CD14-positive monocyte (primary cell): ENCODE measurements at regions of chr12 and their contacts with region 1.

Region 1: DNA sequence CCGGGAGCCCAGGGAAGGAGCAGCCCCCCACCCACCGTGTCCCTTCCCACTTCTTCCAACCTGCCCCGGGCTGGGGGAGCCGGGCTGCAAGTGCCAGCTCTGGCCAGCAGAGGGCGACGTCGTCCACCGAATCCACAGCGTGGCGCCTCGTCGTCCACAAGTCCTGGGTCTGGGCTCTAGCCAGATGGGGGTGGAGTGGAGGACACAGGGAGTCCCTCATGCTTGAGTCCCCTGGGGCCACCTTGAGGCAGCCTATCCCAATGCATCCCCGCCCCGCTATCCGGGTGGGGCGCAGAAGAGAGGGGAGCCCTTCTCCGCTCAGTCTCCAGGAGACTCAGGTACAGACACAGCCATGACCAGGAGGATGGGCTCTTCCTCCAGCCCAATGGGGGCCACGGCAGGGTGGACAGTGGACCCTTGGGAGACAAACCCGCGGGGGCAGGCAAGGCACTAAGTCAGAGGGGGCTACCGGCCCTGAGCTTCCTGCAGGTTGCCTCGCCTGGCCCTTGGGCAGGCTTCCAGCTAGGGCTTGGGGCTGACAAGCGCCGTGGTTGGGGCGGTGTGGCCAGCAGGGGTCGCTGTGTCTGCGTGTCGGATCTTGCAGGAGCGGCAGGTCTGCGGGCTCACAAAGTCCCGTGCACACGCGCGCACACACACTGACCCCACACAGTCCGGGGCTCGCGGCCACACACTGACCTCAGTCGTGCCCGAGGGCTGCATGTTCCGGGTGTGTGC is 5.5 kb downstream of the AQP5 start:
- DNase-seq: peak; percentile 83 to 88 (median 87)
- H3K4me3 ChIP-seq: peak overlapping the region; percentile 10 to 75 (median 42)
- H3K4me3 Mint-ChIP-seq: peak overlapping the region; percentile 73 to 85
- H3K27ac ChIP-seq: no peak overlapping the region
- H3K27ac Mint-ChIP-seq: peak overlapping the region in 3 of 7 donors; percentile 7 to 59 (median 49)
- H3K4me1 ChIP-seq: peaks cover 19 to 26% of the 10 kb centered on the region in 2 donors
- H3K4me1 Mint-ChIP-seq: peaks cover 12% of the 10 kb centered on the region
- H3K27me3 ChIP-seq: peaks cover 9 to 72% of the 10 kb centered on the region in 2 donors
- H3K27me3 Mint-ChIP-seq: peaks cover 48 to 56% (median 49%) of the 10 kb centered on the region in 3 donors
- CTCF ChIP-seq: peak; percentile 97

Region 2: DNA sequence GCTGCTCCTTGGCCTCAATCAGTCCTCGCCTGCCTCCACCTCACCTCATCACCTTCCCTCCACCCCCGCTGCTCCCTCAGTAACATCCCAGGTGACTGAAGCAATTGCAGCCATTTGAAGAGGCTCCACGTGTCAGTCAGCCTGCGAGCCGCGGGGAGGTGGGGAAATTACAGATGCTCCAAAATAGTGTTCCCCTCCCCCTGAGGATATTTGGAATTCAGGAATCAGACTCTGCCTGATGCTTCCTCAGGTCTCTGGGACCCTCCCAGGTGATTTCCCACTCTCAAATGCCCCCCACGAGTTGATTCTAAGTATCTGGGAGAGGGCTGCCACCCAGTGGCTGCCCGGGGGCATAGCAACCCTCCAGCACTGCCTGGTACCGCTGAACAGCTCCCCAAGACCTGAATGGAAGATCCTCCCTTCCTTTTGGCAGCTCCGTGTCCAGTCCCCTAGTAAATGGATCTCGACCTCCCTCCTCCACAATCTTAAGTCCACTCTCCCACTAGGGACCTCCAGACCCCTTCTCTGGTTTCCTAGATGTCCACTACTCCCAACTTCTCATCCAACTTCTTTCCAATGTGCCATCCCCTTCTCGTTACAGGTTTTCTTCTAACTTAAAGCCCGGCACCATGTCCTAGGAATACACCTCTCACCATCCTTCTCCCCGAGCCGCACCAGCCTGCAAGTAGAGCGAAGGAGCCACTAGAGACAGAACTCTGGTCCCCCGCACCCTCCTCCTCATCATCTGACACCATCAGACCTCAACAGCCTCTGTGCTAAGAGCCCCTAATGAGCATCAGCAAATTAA is 88.8 kb after region 1 on chr12:
- intact Hi-C with region 1: loop called (anchors 2 to 5 kb)
- DNase-seq: peak; percentile 40 to 56 (median 51)
- H3K4me3 ChIP-seq: peak overlapping the region in 1 of 3 experiments; percentile 41
- H3K4me3 Mint-ChIP-seq: peak overlapping the region; percentile 48 to 96
- H3K27ac ChIP-seq: no peak overlapping the region
- H3K27ac Mint-ChIP-seq: peak overlapping the region in 1 of 7 donors; percentile 65
- H3K4me1 ChIP-seq: peaks cover 39 to 40% of the 10 kb centered on the region in 2 donors
- H3K4me1 Mint-ChIP-seq: peaks cover 50% of the 10 kb centered on the region
- H3K27me3 ChIP-seq: peaks cover 20 to 35% of the 10 kb centered on the region in 2 donors
- H3K27me3 Mint-ChIP-seq: peaks cover 41 to 52% (median 41%) of the 10 kb centered on the region in 3 donors
- CTCF ChIP-seq: peak; percentile 99

Region 3: DNA sequence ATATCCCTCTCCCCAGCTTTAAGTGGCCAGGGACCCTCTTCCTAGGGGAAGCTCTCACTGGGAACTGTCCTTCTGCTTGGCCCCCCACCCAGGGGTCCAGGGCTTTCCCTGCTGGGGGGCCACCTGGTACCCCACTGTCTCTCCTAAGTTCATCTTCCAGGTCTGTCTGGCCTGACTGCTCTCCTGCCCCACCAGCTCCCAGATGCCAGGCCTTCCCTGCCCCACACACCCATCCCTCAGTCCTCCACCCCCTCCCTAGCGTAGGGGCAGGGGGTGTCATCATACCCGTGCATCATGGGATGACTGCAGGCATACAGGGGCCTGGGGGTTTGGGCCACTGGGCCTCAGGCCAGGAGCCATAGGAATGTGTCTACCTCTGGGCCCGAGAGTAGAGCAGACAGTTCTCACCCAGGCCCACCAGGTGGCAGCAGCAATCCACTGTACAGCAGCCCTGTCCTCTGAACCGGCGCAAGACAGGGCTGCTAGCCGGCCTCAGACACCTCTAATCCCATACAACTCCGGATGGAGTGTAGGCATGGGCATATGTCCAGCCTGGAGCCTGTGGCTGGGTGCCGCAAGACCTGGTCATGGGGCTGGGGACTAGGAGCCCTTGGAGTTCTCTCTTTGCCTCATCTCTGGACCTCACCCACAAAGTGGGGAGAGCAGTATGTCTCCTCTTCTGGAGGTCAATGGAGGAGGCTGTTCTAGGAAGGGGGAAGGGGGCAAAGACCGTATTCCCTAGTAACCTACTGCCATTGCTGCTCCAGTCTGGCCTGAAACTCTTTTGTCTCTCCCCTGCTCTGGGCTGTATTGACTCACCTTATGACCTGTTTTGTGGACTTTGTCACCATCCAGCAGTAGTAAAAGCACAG is 108.0 kb after region 1 on chr12:
- intact Hi-C with region 1: loop called (anchors 1 kb)
- DNase-seq: peak; percentile 68 to 82 (median 78)
- H3K4me3 ChIP-seq: no peak overlapping the region
- H3K4me3 Mint-ChIP-seq: no peak overlapping the region
- H3K27ac ChIP-seq: no peak overlapping the region
- H3K27ac Mint-ChIP-seq: no peak overlapping the region
- H3K4me1 ChIP-seq: peaks cover 0 to 6% of the 10 kb centered on the region in 2 donors
- H3K4me1 Mint-ChIP-seq: peaks cover 9% of the 10 kb centered on the region
- H3K27me3 ChIP-seq: peaks cover 0 to 4% of the 10 kb centered on the region in 2 donors
- H3K27me3 Mint-ChIP-seq: peaks cover 8 to 19% (median 16%) of the 10 kb centered on the region in 3 donors
- CTCF ChIP-seq: peak; percentile 93